Naive thymus-derived CD8-positive, alpha-beta T cell (primary cell): ENCODE measurements at regions of chr18 and their contacts with region 1.

Region 1: DNA sequence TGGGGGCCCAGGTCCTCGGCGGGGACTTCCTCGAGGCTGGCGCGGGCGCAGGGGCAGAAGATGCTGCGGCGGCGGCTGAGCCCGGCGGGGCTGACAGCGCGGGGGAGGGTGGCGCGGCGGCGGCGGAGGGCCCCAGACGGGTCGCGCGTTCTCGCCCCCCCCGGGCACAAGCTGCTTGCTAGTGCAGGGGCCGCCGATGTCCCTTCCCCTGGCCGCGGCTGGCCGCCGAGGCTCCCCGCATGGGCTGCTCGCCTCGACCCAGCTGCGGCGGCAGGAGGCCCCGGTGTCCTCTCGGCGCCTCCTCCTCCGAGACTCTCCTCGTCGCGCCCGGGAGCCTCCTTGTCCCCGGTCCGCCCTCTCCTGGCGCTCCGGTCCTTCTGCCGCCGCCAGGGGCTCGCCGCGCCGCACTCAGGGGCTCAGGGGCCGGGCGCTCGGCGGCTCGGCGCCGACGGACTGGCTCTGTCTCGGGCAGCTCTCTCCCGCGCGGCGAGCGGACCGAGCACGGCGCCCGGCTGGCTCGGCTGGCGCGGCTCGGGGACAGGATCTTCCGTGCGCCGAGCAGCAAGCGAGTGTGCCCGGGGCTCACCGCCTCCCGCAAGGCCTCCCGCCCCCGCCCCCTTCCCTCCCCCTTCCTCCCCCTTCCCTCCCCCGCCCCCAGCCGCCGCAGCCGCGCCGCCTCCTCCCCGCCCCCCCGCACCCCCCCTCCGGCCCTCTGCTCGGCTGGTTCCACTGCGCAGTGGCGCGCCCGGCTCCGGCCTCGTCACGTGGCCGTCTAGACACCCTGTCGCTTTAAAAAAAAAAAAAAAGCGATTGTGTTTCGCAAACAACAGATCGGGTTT is 902 bp upstream of the SMAD7 start:
- DNase-seq: peak; percentile 61 to 89 (median 66)
- ATAC-seq: peak; percentile 43 to 44
- H3K4me3 Mint-ChIP-seq: peak overlapping the region; percentile 86 to 97 (median 94)
- H3K27ac Mint-ChIP-seq: peak overlapping the region; percentile 93 to 98 (median 96)
- H3K4me1 Mint-ChIP-seq: peaks cover 30 to 55% (median 47%) of the 10 kb centered on the region in 4 donors
- H3K27me3 Mint-ChIP-seq: peaks cover 0 to 16% (median 5%) of the 10 kb centered on the region in 5 donors

Region 2: DNA sequence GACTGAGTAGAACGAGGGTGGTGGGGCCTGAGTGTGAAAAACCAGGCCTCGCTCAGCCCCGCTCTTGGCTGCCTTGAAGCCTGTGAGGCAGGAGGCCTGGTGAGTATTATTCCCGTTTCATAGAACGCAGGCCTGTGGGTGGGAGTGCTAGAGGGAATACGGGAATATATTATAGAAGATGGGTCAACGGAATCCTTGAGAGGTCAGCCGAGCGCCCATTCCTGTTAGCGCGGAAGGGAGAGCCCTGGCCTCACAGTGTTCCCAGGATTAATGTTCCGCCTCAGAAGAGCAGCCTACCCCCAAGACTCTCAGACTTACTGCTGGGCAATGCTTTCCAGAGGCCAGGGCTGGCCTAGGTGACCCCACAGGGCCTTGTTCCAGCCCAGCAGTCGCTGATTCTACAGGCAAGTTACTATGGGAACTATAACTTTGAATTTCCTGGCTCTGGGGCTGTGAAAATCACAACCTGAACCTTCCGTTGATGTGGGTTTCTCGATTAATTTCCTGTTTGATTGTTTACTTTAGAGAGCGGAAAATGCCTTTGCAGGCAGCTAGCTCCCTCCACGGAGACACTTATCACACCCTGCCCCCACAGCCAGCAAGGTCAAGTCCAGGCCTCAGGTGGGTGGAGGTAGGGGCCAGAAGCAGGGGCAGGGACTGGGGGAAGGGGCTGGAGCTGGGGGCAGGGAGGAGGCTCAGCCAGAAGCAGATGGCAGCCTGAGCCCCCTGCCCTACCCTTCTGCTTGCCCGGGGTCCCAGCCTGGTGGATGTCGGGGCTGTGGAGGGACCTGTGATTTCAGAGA is 109.2 kb before region 1 on chr18:
- POLR2A ChIA-PET with region 1: interaction called, 10 read pairs
- DNase-seq: peak in 8 of 10 donors; percentile 17 to 85 (median 69)
- ATAC-seq: peak; percentile 88 to 89
- H3K4me3 Mint-ChIP-seq: peak overlapping the region; percentile 56 to 83 (median 67)
- H3K27ac Mint-ChIP-seq: peak overlapping the region; percentile 84 to 97 (median 96)
- H3K4me1 Mint-ChIP-seq: peaks cover 44 to 80% (median 75%) of the 10 kb centered on the region in 4 donors
- H3K27me3 Mint-ChIP-seq: no peaks in the 10 kb centered on the region

Region 3: DNA sequence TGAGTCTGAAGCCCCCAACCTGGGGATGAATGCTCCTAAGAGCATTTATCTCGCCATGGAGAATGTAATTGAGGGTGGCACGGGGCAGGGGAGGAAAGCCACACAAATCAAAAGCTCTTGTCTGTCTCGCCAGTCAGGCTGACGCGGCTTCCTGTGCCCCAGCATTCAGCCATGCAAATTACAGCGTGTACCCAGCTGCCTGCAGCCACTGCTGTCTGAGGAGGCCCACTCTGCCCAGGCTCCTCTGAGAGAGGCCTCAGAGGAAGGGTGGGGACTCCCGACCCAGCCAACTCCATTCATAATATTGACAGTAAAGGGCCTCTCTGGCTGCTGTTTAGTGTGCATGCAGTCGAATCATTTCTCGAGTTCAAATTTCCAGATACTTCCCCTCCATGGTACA is 22.9 kb before region 1 on chr18:
- POLR2A ChIA-PET with region 1: interaction called, 26 read pairs
- DNase-seq: peak; percentile 40 to 88 (median 71)
- ATAC-seq: peak; percentile 93 to 98
- H3K4me3 Mint-ChIP-seq: peak overlapping the region; percentile 62 to 86 (median 78)
- H3K27ac Mint-ChIP-seq: peak overlapping the region; percentile 79 to 95 (median 89)
- H3K4me1 Mint-ChIP-seq: peaks cover 43 to 98% (median 89%) of the 10 kb centered on the region in 4 donors
- H3K27me3 Mint-ChIP-seq: no peaks in the 10 kb centered on the region

Region 4: DNA sequence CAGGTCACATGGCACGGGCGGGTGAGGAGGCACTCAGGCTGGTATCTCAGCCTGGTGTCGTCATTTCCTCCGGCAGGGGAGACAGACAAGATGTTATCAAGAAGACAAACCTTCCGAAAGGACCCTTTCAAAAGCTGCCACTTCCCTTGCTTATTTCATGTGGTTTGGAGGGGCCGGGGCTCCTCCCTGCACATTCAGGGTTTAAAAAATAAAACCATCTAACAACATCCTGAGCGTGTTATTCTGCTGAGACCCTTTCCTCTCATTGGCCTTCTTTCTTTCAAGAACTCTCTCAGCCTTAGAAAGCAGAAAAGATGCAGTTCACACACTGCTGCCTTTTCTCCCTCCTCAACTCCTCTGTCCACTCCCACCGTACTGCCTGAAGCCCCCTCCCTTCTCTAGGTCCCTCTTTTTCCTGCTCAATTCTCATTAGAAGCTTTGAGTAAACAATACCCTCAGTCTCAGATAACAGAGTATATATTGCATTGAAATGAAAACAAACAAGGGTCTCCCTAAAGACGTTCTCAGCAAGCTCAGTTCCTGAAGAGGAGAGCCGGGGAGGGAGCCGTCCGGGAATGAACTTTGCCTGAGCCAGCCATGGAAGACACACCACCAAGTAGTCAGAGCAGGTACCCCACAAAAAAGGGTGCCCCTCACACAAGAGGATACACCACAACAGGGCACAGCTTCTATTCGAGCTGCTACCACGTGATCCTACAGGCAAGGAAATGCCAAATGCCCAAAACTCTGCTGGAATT is 10.6 kb before region 1 on chr18:
- POLR2A ChIA-PET with region 1: interaction called, 71 read pairs
- DNase-seq: peak; percentile 74 to 98 (median 94)
- ATAC-seq: peak; percentile 84 to 89
- H3K4me3 Mint-ChIP-seq: peak overlapping the region; percentile 73 to 88 (median 85)
- H3K27ac Mint-ChIP-seq: peak overlapping the region; percentile 89 to 99 (median 98)
- H3K4me1 Mint-ChIP-seq: peaks cover 36 to 93% (median 92%) of the 10 kb centered on the region in 4 donors
- H3K27me3 Mint-ChIP-seq: peaks cover 0 to 20% (median 0%) of the 10 kb centered on the region in 5 donors